Activated T-helper 1 cell treated with anti-CD3 and anti-CD28 coated beads, Interleukin-12 subunit alpha, Interleukin-12 subunit beta, Interleukin-2, Interleukin-4 antibody, amounts not matched to agents 30 ng/mL and 10 ng/mL and 1 ng/mL, durations not matched to agents 14 hours and 24 hours and 36 hours (primary cell): ENCODE measurements at regions of chr13 and their contacts with region 1.

Region 1: DNA sequence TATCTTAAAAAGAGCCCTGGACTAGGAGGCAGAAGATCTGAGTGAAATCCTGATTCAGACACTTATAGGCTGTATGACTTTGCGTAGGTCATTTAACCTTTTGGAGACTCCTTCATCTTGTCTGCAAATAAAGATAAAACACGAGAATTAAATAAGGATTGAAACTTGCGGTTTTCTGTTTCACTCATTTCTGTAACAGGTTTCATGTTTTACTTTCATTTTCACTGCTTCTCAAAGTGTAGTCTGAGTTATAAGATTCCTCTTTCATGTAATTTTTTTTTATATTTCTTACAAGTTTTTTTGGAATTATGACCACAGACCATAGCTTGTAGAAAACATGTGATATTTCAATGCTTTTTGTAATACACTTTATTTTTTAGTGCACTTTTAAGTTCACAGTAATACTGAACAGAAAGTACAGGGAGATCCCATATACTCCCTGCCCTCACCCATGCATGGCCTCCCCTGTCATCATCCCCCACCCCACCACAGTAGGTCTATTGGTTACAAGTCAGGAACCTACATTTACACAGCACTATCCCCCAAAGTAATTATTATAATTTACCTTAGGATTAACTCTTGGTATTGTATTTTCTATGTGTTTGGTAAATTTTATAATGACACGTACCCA is 174.6 kb downstream of the ITGBL1 start:
- DNase-seq: no peak
- H3K4me3 Mint-ChIP-seq: no peak overlapping the region
- H3K27ac Mint-ChIP-seq: peak overlapping the region; percentile 69
- H3K4me1 Mint-ChIP-seq: peaks cover 40% of the 10 kb centered on the region
- H3K27me3 Mint-ChIP-seq: peaks cover 19% of the 10 kb centered on the region

Region 2: DNA sequence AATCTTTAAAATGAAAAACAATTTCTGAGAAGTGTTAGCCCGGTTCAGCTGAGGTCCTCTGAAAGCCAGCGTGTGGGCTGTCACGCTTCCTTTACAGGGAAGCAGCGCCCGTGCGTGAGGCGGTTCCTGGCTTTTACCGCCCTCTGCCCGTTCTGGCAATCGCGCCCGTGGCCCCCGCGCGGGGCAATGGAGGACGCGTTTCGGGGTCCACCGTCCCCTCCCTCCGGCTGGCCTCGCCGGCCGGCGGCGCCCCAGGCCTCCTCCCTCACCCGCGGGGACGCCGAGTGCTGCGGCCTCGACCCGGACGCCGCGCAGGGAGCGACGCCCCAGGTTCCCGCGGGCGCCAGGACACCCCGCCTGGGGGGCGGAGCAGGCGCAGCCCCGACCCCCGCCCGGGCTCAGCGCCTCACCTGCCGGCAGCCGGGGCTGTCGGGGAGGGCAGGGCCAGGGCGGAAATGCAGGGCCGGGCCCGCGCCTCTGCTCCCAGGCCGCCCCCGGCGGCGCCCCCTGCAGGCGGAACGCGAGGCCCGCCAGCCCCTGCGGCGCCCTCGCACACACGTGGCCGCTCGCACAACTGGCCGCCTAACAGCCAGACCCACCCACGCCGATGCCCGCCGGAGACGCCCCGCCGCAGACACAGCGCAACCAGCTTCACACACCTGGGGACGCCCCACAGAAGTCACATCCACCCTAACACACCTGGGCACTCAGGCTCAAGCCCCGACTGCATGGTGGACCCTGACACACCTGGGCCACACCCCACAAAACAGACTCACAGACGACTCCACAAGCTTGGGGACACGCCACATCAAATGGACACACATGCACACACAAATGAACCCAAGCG is 1038.5 kb before region 1 on chr13 and contains the start of gene GGACT:
- intact Hi-C with region 1: loop called (anchors 10 kb)
- DNase-seq: peak; percentile 79
- H3K4me3 Mint-ChIP-seq: peak within 1 kb of the TSS; percentile 87
- H3K27ac Mint-ChIP-seq: peak within 1 kb of the TSS; percentile 94
- H3K4me1 Mint-ChIP-seq: peaks cover 57% of the 10 kb centered on the region
- H3K27me3 Mint-ChIP-seq: no peaks in the 10 kb centered on the region
- total RNA-seq, gene GGACT: 4.0 and 7.2 TPM in 2 replicates

Region 3: DNA sequence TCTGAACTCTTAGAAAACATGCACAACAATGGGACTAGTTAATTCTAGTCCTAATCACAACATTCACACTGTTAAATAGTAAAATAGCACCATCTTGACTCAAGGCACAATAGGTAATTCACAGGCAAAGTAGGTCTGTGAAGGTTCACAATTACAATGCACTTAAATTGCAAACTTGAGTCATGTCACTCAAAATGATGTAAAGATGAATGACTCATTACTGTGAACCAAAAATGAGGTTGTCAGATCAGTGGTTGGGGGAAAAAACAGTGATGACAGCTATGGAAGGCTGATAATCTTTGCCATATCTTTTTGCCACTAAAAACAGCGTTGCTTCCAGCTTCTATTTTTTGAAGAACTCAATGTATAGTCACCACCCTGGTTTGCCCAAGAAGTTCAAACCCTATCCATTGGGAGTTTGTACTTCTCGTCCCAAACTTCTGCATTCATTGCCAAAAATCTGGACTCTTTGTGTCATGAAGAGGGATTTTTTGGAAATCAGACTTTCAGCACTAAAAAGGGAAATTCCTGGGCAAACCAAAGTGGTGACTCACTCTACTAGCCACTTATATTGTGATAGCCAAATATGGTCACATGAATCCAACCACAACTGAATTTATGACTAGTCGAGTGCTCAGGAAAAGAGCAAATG is 751.5 kb before region 1 on chr13:
- intact Hi-C with region 1: loop called (anchors 5 kb)
- DNase-seq: peak; percentile 4
- H3K4me3 Mint-ChIP-seq: no peak overlapping the region
- H3K27ac Mint-ChIP-seq: peak overlapping the region; percentile 41
- H3K4me1 Mint-ChIP-seq: peaks cover 18% of the 10 kb centered on the region
- H3K27me3 Mint-ChIP-seq: peaks cover 5% of the 10 kb centered on the region

Region 4: DNA sequence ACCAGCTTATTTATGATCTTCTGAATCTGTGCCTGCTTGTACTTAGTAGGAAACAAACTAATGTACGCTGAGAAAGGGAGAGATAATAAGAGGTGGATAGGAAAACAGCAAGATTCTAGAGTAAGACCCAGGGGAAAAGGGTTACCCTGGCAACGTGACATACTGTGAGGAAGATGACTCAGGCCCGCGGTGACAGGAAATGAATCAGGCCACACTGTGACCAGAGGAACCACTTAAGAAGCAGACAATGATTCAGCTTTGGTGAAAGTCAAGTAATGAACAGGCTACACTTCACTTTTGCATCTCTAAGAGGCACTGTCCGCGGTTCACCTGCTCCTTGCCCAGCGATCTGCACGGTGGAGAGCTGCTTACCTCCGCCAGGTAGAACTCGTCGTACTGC is 369.0 kb before region 1 on chr13:
- intact Hi-C with region 1: loop called (anchors 2 kb)
- DNase-seq: peak; percentile 40
- H3K4me3 Mint-ChIP-seq: no peak overlapping the region
- H3K27ac Mint-ChIP-seq: peak overlapping the region; percentile 1
- H3K4me1 Mint-ChIP-seq: peaks cover 10% of the 10 kb centered on the region
- H3K27me3 Mint-ChIP-seq: peaks cover 9% of the 10 kb centered on the region

Region 5: DNA sequence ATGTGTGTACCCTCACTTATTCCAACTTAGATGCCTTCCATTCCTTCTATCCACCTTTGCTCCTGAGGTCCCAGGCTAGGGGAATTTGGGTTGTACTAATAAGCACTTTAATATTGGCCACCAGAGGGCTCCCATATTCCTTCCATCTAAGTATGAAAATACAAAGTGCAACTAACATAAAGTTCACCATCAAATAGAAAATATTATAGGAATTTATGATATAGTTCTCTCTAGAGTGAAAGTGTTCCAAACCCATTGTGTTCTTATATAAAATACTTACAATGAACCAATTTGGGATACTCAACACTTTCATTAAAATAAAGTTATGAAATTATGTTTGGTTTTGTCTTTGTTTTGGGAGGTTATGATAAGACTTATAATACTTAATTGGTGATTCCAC is 112.3 kb before region 1 on chr13:
- intact Hi-C with region 1: loop called (anchors 5 kb)
- DNase-seq: no peak
- H3K4me3 Mint-ChIP-seq: no peak overlapping the region
- H3K27ac Mint-ChIP-seq: no peak overlapping the region
- H3K4me1 Mint-ChIP-seq: peaks cover 2% of the 10 kb centered on the region
- H3K27me3 Mint-ChIP-seq: peaks cover 4% of the 10 kb centered on the region

Region 6: DNA sequence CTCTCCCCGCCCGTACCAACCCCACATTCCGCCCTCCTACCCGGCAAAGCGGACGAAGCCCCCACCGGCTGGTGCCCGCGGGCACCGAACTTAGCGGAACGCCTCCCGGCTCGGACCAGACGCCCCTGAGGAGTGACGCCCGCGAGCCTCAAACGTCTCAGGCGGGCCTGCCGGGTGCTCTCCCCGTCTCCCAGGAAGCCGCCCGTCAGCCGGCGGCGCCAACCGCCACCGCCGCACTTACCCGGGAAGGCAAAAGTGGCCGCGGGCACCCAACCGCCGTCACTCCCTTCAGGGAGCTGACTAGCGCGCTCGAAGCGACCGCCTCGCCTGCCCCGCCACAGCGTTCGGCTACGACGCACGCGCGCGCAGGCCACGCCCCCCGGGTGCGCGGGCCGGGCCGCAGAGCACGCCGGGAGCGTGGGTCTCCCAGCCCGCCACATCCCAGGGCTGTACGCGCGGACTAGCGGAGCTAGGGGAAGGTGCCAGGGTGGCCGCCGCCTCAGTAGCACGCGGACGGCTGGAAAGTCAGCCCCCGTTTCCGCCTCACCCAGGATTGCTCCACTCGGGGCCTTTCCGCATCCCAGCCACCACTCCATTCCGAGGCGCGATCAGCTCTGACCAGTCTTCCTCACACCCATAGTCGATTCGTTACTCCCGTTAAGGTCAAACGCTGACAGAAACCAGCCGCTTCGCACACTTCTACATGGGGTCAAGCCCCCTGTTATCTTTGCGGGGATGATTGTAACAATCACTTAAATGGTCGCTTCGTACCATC is 1146.6 kb after region 1 on chr13 and contains the start of gene TEX30:
- intact Hi-C with region 1: loop called (anchors 10 kb)
- DNase-seq: peak; percentile 89
- H3K4me3 Mint-ChIP-seq: peak within 1 kb of the TSS; percentile 95
- H3K27ac Mint-ChIP-seq: peak within 1 kb of the TSS; percentile 95
- H3K4me1 Mint-ChIP-seq: peaks cover 66% of the 10 kb centered on the region
- H3K27me3 Mint-ChIP-seq: no peaks in the 10 kb centered on the region
- total RNA-seq, gene TEX30: 60.2 and 66.0 TPM in 2 replicates